ENCODE measurements at regions of chr16 and their contacts with region 1.

Region 1: GRCh38 chr16:70770626-70771552 is 30.1 kb downstream of the VAC14 start:
- DNase-seq: peak in 9 of 10 donors; percentile 49 to 82 (median 76)
- H3K4me3 ChIP-seq: no peak overlapping the region
- H3K27ac ChIP-seq: peak overlapping the region in 16 of 59 donors; percentile 2 to 67 (median 33)
- H3K27me3 ChIP-seq: no peaks in the 10 kb centered on the region
- CTCF ChIP-seq: peak; percentile 68 to 99 (median 96)

Region 2: GRCh38 chr16:70534971-70535370 is 235.9 kb before region 1 on chr16:
- intact Hi-C with region 1: loop called (anchors 10 kb)
- DNase-seq: no peak
- H3K4me3 ChIP-seq: no peak overlapping the region
- H3K27ac ChIP-seq: no peak overlapping the region
- H3K27me3 ChIP-seq: no peaks in the 10 kb centered on the region
- CTCF ChIP-seq: no peak

Region 3: GRCh38 chr16:70679666-70680494 is 91.0 kb before region 1 on chr16:
- intact Hi-C with region 1: loop called (anchors 1 to 2 kb)
- DNase-seq: no peak
- H3K4me3 ChIP-seq: peak overlapping the region in 54 of 59 donors; percentile 11 to 89 (median 50)
- H3K27ac ChIP-seq: peak overlapping the region; percentile 48 to 98 (median 94)
- H3K27me3 ChIP-seq: no peaks in the 10 kb centered on the region
- CTCF ChIP-seq: peak in 51 of 56 donors; percentile 24 to 93 (median 64)

Region 4: GRCh38 chr16:70691223-70692129 is 79.4 kb before region 1 on chr16:
- intact Hi-C with region 1: no loop called
- DNase-seq: peak in 9 of 10 donors; percentile 84 to 95 (median 92)
- H3K4me3 ChIP-seq: peak overlapping the region in 2 of 59 donors; percentile 2 to 30
- H3K27ac ChIP-seq: peak overlapping the region; percentile 59 to 99 (median 93)
- H3K27me3 ChIP-seq: no peaks in the 10 kb centered on the region
- CTCF ChIP-seq: no peak

Region 5: GRCh38 chr16:70737377-70738082 is 33.4 kb before region 1 on chr16:
- intact Hi-C with region 1: loop called in 1 of 2 experiments (anchors 5 kb)
- DNase-seq: peak in 1 of 10 donors; percentile 51
- H3K4me3 ChIP-seq: no peak overlapping the region
- H3K27ac ChIP-seq: peak overlapping the region in 50 of 59 donors; percentile 1 to 84 (median 67)
- H3K27me3 ChIP-seq: no peaks in the 10 kb centered on the region
- CTCF ChIP-seq: no peak